ENCODE measurements at regions of chr1 and their contacts with region 1.

Region 1: GRCh38 chr1:210584439-210585113 is 255.9 kb downstream of the HHAT start:
- DNase-seq: peak; percentile 70 to 85 (median 81)
- ATAC-seq: peak in 3 of 4 donors; percentile 84 to 91 (median 91)
- H3K4me3 ChIP-seq: no peak overlapping the region
- H3K27ac ChIP-seq: no peak overlapping the region
- H3K4me1 ChIP-seq: peaks cover 0 to 3% (median 0%) of the 10 kb centered on the region in 12 donors
- H3K27me3 ChIP-seq: no peaks in the 10 kb centered on the region
- CTCF ChIP-seq: peak; percentile 50 to 69 (median 60)
- POLR2A ChIP-seq: no peak

Region 2: GRCh38 chr1:209884665-209885117 is 699.9 kb before region 1 on chr1:
- intact Hi-C with region 1: no loop called
- DNase-seq: peak in 2 of 5 donors; percentile 42 to 48
- ATAC-seq: peak; percentile 51 to 97 (median 74)
- H3K4me3 ChIP-seq: no peak overlapping the region
- H3K27ac ChIP-seq: no peak overlapping the region
- H3K4me1 ChIP-seq: no peaks in the 10 kb centered on the region
- H3K27me3 ChIP-seq: peaks cover 0 to 45% (median 19%) of the 10 kb centered on the region in 9 donors
- CTCF ChIP-seq: no peak
- POLR2A ChIP-seq: no peak

Region 3: DNA sequence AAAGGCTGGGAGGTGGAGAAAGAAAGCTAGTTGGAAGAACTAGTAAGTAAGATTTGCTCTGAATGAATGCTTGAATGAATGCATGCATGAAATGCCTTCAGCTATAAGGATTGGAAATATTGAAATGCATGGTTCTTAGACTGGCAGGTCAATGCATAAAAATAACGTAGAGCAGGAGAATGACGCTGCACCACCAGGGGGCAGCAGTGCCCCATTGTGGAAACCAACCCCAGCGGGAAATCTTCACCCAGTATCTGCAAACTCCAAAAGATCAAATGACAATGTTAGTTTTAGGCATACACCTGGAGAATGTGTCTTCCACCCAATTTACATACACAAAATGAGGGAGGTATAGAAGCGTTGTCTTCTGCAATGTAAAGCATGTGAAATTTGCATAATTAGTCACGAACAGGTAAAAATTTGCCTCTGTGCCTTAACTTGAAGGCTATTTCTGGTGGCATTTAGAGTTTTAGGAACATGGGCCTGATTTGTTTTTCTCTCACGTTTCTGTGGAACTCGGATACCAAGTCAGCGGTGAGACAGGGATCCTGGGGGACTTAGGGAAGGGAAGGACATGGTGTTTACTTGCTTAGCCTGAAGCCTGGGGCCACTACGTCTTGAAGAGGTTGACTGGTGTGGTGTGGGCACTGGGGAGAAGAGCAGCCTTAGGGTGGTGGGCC is 177.2 kb before region 1 on chr1:
- intact Hi-C with region 1: loop called in 1 of 10 experiments (anchors 5 kb)
- DNase-seq: peak; percentile 33 to 77 (median 44)
- ATAC-seq: peak in 2 of 4 donors; percentile 63 to 68
- H3K4me3 ChIP-seq: no peak overlapping the region
- H3K27ac ChIP-seq: no peak overlapping the region
- H3K4me1 ChIP-seq: no peaks in the 10 kb centered on the region
- H3K27me3 ChIP-seq: no peaks in the 10 kb centered on the region
- CTCF ChIP-seq: peak; percentile 88 to 99 (median 96)
- POLR2A ChIP-seq: no peak

Region 4: DNA sequence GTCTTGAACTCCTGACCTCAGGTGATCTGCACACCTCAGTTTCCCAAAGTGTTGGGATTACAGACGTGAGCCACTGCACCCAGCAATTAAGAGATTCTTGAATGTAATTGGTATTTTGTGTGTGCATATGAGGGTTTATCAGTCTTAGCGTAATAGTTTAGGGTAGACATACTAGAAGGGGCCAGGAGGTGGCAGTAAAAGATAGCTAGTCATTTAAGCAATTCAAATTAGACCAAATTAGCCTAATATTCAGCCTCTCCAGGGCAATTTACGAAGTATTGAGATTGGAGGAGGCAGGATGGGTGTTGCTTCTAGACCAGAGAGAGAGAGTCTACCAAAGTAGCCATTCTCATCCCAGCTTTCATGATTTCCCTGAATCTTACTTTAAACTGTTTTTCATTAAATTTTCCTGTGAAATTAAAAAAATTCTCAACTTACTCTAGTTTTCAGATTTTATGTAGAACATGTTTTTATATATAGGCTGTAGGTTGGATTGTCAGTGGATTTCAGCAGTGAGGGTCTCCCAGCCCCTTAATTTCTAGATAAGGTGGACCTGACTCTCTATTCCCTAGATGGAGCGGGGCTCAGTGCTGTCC is 136.2 kb before region 1 on chr1:
- intact Hi-C with region 1: loop called in 5 of 10 experiments (anchors 5 to 10 kb)
- DNase-seq: no peak
- ATAC-seq: peak in 2 of 4 donors; percentile 53 to 63
- H3K4me3 ChIP-seq: no peak overlapping the region
- H3K27ac ChIP-seq: no peak overlapping the region
- H3K4me1 ChIP-seq: no peaks in the 10 kb centered on the region
- H3K27me3 ChIP-seq: no peaks in the 10 kb centered on the region
- CTCF ChIP-seq: peak; percentile 36 to 68 (median 56)
- POLR2A ChIP-seq: no peak

Region 5: GRCh38 chr1:210455840-210456603 is 128.6 kb before region 1 on chr1:
- intact Hi-C with region 1: loop called in 1 of 10 experiments (anchors 10 kb)
- DNase-seq: no peak
- ATAC-seq: no peak
- H3K4me3 ChIP-seq: no peak overlapping the region
- H3K27ac ChIP-seq: no peak overlapping the region
- H3K4me1 ChIP-seq: no peaks in the 10 kb centered on the region
- H3K27me3 ChIP-seq: no peaks in the 10 kb centered on the region
- CTCF ChIP-seq: no peak
- POLR2A ChIP-seq: no peak

Region 6: GRCh38 chr1:210944252-210944651 is 359.7 kb after region 1 on chr1:
- intact Hi-C with region 1: loop called in 2 of 10 experiments (anchors 10 kb)
- DNase-seq: no peak
- ATAC-seq: no peak
- H3K4me3 ChIP-seq: no peak overlapping the region
- H3K27ac ChIP-seq: no peak overlapping the region
- H3K4me1 ChIP-seq: no peaks in the 10 kb centered on the region
- H3K27me3 ChIP-seq: no peaks in the 10 kb centered on the region
- CTCF ChIP-seq: no peak
- POLR2A ChIP-seq: no peak

Region 7: GRCh38 chr1:210951279-210951678 is 366.7 kb after region 1 on chr1:
- intact Hi-C with region 1: loop called in 5 of 10 experiments (anchors 5 to 10 kb)
- DNase-seq: no peak
- ATAC-seq: no peak
- H3K4me3 ChIP-seq: no peak overlapping the region
- H3K27ac ChIP-seq: no peak overlapping the region
- H3K4me1 ChIP-seq: no peaks in the 10 kb centered on the region
- H3K27me3 ChIP-seq: no peaks in the 10 kb centered on the region
- CTCF ChIP-seq: no peak
- POLR2A ChIP-seq: no peak

Region 8: DNA sequence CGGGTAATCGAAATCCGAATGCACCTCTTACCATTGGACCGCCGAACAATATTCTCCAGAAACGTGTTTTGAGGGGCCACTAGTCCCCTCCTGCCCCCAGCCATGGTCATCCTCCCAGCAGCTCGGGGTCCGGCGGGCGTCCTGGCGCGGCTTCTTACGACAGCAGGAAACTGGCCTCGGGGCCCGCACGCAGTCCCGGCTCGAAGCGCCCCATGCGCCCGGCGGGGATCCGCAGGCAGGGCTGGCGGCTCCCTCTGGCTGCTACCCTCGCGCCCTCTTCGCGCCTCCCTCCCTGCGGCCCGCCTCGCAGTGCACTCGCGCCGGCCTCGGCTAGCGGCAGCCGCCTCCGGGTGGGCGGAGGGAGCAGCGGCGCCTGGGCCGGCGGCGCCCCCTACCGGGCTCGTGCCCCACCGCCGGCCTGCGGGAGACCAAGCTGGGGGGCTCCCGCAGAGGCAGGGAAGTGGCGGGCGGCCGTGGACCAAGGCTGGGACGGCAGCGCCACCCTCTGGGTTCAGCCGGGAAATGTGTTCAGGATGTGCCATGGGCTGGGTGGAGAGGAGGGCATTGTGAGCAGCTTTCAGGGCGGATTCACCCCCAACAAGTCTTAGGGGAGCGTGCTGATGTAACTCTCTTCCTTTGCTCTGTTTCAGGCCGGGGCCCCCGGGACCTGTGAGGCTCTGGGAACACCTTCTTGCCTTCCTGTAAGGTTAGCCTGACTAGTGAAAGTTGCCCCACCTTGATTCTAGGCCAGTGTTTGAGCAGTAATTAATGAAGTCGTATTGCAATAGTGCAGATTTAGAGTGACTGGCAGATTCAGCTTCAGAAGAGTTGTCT is 549.5 kb after region 1 on chr1 and contains the start of gene KCNH1:
- intact Hi-C with region 1: loop called (anchors 1 to 5 kb)
- DNase-seq: peak; percentile 63 to 83 (median 77)
- ATAC-seq: peak; percentile 80 to 99 (median 96)
- H3K4me3 ChIP-seq: peak within 1 kb of the TSS; percentile 11 to 54 (median 46)
- H3K27ac ChIP-seq: no peak within 1 kb of the TSS
- H3K4me1 ChIP-seq: peaks cover 0 to 16% (median 10%) of the 10 kb centered on the region in 12 donors
- H3K27me3 ChIP-seq: peaks cover 0 to 70% (median 20%) of the 10 kb centered on the region in 9 donors
- CTCF ChIP-seq: peak; percentile 62 to 97 (median 85)
- POLR2A ChIP-seq: no peak
- total RNA-seq, gene KCNH1: 0.03 TPM in 1 of 9 donors, not detected in the others